ENCODE measurements at regions of chr3 and their contacts with region 1.

Region 1: GRCh38 chr3:156535162-156535627 is 19.7 kb downstream of the SSR3 start:
- DNase-seq: no peak
- ATAC-seq: no peak
- H3K4me3 ChIP-seq: no peak overlapping the region
- H3K4me3 Mint-ChIP-seq: no peak overlapping the region
- H3K27ac ChIP-seq: no peak overlapping the region
- H3K27ac Mint-ChIP-seq: no peak overlapping the region
- H3K4me1 ChIP-seq: no peaks in the 10 kb centered on the region
- H3K4me1 Mint-ChIP-seq: no peaks in the 10 kb centered on the region
- H3K27me3 ChIP-seq: no peaks in the 10 kb centered on the region
- H3K27me3 Mint-ChIP-seq: no peaks in the 10 kb centered on the region

Region 2: GRCh38 chr3:156151824-156152428 is 383.3 kb before region 1 on chr3:
- CTCF ChIA-PET with region 1: interaction called, 3 to 13 read pairs
- POLR2A ChIA-PET with region 1: no interaction called
- DNase-seq: peak; percentile 5 to 70 (median 39)
- ATAC-seq: peak; percentile 38 to 69 (median 53)
- H3K4me3 ChIP-seq: no peak overlapping the region
- H3K4me3 Mint-ChIP-seq: no peak overlapping the region
- H3K27ac ChIP-seq: no peak overlapping the region
- H3K27ac Mint-ChIP-seq: no peak overlapping the region
- H3K4me1 ChIP-seq: no peaks in the 10 kb centered on the region
- H3K4me1 Mint-ChIP-seq: peaks cover 0 to 5% (median 2%) of the 10 kb centered on the region in 3 donors
- H3K27me3 ChIP-seq: no peaks in the 10 kb centered on the region
- H3K27me3 Mint-ChIP-seq: peaks cover 0 to 6% of the 10 kb centered on the region in 2 donors